CD4-positive, alpha-beta T cell (primary cell): ENCODE measurements at regions of chr16 and their contacts with region 1.

Region 1: DNA sequence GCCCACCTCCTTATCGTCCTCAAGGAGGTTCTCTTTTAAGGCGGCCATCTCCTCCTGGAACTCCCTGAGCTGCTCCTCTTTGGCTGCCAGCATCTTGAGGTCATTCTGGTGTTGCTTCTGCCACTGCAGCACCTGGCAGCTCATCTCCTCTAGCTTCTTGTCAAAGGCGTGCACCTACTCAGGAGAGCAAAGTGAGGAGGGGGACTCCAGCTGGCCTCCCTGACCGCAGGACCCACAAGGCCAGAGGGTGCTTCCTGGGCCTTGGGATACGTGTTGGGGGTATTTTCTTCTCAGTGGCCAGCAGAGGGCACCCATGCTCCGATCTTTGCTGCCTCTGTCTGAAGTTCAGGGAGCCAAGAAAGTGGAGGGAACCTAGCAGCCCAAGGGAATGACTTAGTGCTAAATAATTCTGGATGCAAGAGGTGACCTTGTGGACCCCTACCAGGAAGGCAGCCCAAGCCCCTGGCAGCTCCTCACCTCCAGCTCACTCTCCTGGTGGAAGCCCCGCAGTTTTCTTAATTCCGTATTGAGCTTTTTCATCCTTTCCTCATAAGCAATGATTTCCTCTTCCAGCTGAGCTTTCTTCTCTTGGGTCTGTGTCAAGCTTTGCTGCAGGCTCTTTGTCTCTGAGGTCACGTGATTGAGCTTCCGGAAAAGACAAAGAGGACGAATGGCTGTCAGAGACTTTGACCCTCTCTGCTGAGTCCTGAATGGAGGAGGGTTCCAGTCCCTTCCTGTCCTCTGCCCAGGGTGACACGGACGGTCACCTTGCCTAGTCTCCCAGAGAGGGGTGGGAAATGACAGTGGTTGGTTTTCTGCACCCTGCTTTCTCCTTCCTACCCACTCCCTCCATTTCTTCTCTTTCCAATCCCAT is 31.4 kb downstream of the DHX38 start:
- DNase-seq: peak; percentile 38 to 77 (median 48)
- ATAC-seq: peak; percentile 34
- H3K4me3 ChIP-seq: no peak overlapping the region
- H3K4me3 Mint-ChIP-seq: no peak overlapping the region
- H3K27ac ChIP-seq: no peak overlapping the region
- H3K27ac Mint-ChIP-seq: no peak overlapping the region
- H3K4me1 ChIP-seq: peaks cover 6% of the 10 kb centered on the region
- H3K4me1 Mint-ChIP-seq: no peaks in the 10 kb centered on the region
- H3K27me3 ChIP-seq: no peaks in the 10 kb centered on the region
- H3K27me3 Mint-ChIP-seq: no peaks in the 10 kb centered on the region
- CTCF ChIP-seq: peak; percentile 85

Region 2: DNA sequence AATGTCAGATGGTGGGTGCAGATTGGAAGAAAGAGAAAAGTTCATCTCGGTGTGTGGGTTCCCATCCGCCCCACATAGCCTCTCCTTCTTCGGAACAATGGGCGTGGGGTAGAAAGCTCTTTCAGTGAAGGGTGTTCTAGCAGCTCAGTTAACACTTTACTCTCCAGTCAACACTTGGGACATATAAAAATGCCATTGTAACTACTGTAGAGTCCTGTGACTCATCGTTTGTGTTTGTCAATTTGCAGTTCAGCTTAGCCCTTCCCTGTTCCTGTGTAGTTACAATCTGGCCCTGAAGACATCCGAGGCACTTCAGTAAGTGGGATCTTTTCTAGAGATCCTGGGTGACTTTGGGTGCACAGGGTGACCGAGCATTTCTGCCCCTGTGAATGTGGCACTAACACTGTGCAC is 1963.0 kb before region 1 on chr16:
- CTCF ChIA-PET with region 1: no interaction called
- POLR2A ChIA-PET with region 1: no interaction called
- intact Hi-C with region 1: loop called (anchors 10 kb)
- DNase-seq: no peak
- ATAC-seq: no peak
- H3K4me3 ChIP-seq: no peak overlapping the region
- H3K4me3 Mint-ChIP-seq: no peak overlapping the region
- H3K27ac ChIP-seq: no peak overlapping the region
- H3K27ac Mint-ChIP-seq: peak overlapping the region; percentile 5
- H3K4me1 ChIP-seq: no peaks in the 10 kb centered on the region
- H3K4me1 Mint-ChIP-seq: peaks cover 5% of the 10 kb centered on the region
- H3K27me3 ChIP-seq: no peaks in the 10 kb centered on the region
- H3K27me3 Mint-ChIP-seq: no peaks in the 10 kb centered on the region
- CTCF ChIP-seq: no peak

Region 3: DNA sequence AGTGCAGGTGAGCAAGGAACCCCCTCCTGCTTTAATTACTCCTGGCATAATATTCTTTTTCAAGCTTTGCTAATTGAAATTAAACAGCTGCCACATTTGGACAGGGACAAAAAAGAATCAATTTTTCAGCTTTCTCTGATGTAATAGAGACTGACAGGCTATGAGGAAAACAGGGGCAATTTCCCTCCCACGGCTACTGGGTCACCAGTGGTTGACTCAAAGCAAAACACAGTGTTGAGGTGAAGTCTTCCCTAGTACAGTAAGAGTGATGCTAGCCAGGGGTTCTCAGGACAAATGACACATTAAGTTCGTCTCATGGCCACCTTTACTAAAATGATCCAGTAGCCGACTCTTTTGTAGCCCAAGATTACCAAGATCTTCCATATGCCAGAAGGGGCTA is 85.6 kb after region 1 on chr16:
- CTCF ChIA-PET with region 1: no interaction called
- POLR2A ChIA-PET with region 1: no interaction called
- intact Hi-C with region 1: no loop called
- DNase-seq: no peak
- ATAC-seq: no peak
- H3K4me3 ChIP-seq: no peak overlapping the region
- H3K4me3 Mint-ChIP-seq: no peak overlapping the region
- H3K27ac ChIP-seq: no peak overlapping the region
- H3K27ac Mint-ChIP-seq: no peak overlapping the region
- H3K4me1 ChIP-seq: no peaks in the 10 kb centered on the region
- H3K4me1 Mint-ChIP-seq: no peaks in the 10 kb centered on the region
- H3K27me3 ChIP-seq: no peaks in the 10 kb centered on the region
- H3K27me3 Mint-ChIP-seq: peaks cover under 1% of the 10 kb centered on the region
- CTCF ChIP-seq: no peak

Region 4: GRCh38 chr16:72467157-72467759 is 342.3 kb after region 1 on chr16:
- CTCF ChIA-PET with region 1: no interaction called
- POLR2A ChIA-PET with region 1: no interaction called
- intact Hi-C with region 1: loop called in 1 of 2 experiments (anchors 5 kb)
- DNase-seq: peak in 3 of 14 experiments; percentile 9 to 24 (median 15)
- ATAC-seq: no peak
- H3K4me3 ChIP-seq: no peak overlapping the region
- H3K4me3 Mint-ChIP-seq: no peak overlapping the region
- H3K27ac ChIP-seq: no peak overlapping the region
- H3K27ac Mint-ChIP-seq: no peak overlapping the region
- H3K4me1 ChIP-seq: no peaks in the 10 kb centered on the region
- H3K4me1 Mint-ChIP-seq: no peaks in the 10 kb centered on the region
- H3K27me3 ChIP-seq: no peaks in the 10 kb centered on the region
- H3K27me3 Mint-ChIP-seq: no peaks in the 10 kb centered on the region
- CTCF ChIP-seq: no peak

Region 5: DNA sequence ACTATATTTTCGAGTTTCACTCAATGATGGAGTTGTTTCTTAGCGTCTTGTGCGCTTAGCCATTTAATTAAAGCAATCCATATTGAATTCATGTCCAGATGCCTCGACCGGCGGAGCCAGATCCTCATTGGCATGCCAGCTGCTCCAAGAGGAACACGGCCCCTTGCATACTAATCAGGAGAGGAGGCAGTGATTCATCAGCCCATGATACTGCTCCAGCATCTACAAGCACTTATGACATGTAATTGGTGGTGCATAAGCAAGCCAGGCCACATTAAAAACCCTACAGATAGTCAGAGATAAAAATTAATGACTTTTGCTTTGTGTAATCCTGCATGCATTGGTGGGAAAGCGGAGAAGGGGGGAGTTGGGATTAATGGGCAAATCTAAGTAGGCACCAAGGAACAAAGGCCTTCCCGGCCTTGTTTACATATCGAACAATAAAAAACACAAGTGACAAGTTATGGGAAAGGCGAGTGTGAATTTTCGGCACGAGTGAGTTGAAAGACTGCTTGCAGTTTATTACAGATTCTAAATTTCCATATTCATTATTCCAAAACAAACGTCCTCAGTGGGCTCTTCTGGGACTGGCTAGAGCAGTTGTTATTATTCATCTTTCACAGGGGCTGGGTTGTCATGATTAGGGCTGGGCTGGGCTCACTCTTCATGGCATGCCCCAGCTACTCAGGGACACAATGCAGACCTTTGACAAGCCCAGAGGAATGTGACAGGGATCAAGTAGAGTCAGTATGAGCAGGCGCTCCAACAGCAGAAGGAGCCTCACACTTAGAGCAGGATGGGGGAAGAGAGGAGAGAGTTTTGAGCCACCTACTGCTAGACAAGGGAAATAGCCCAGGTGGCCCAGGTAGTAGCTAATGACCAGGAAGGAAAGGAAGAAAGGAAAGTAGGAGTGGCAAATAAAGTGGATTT is 1204.6 kb after region 1 on chr16:
- CTCF ChIA-PET with region 1: no interaction called
- POLR2A ChIA-PET with region 1: no interaction called
- intact Hi-C with region 1: no loop called
- DNase-seq: no peak
- ATAC-seq: no peak
- H3K4me3 ChIP-seq: no peak overlapping the region
- H3K4me3 Mint-ChIP-seq: no peak overlapping the region
- H3K27ac ChIP-seq: no peak overlapping the region
- H3K27ac Mint-ChIP-seq: no peak overlapping the region
- H3K4me1 ChIP-seq: no peaks in the 10 kb centered on the region
- H3K4me1 Mint-ChIP-seq: no peaks in the 10 kb centered on the region
- H3K27me3 ChIP-seq: no peaks in the 10 kb centered on the region
- H3K27me3 Mint-ChIP-seq: no peaks in the 10 kb centered on the region
- CTCF ChIP-seq: no peak

Region 6: DNA sequence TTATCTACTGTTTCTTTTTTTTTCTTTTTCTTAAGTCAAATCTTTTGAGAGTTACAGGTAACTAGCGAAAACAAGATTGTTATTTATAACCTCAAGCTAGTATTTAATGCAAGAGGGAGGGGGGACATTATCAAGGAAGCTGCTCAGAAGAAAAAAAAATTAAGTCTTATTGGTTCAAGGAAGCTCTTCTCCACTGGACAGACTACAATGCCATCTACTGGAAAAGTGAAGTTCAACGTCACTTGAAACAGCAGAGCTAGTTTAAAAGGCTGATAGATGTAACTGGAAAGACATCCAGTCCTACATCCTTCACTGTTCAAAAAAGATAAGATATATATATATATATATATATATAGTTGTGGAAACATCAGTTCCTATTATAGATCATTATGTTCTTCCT is 1753.6 kb after region 1 on chr16:
- CTCF ChIA-PET with region 1: no interaction called
- POLR2A ChIA-PET with region 1: no interaction called
- intact Hi-C with region 1: loop called in 1 of 2 experiments (anchors 5 kb)
- DNase-seq: peak in 2 of 14 experiments; percentile 12 to 13
- ATAC-seq: no peak
- H3K4me3 ChIP-seq: no peak overlapping the region
- H3K4me3 Mint-ChIP-seq: no peak overlapping the region
- H3K27ac ChIP-seq: no peak overlapping the region
- H3K27ac Mint-ChIP-seq: no peak overlapping the region
- H3K4me1 ChIP-seq: no peaks in the 10 kb centered on the region
- H3K4me1 Mint-ChIP-seq: no peaks in the 10 kb centered on the region
- H3K27me3 ChIP-seq: no peaks in the 10 kb centered on the region
- H3K27me3 Mint-ChIP-seq: no peaks in the 10 kb centered on the region
- CTCF ChIP-seq: no peak

Region 7: GRCh38 chr16:73956587-73957494 is 1831.8 kb after region 1 on chr16:
- CTCF ChIA-PET with region 1: interaction called, 3 read pairs
- POLR2A ChIA-PET with region 1: no interaction called
- intact Hi-C with region 1: loop called in 1 of 2 experiments (anchors 5 kb)
- DNase-seq: peak in 5 of 14 experiments; percentile 8 to 47 (median 25)
- ATAC-seq: no peak
- H3K4me3 ChIP-seq: no peak overlapping the region
- H3K4me3 Mint-ChIP-seq: no peak overlapping the region
- H3K27ac ChIP-seq: no peak overlapping the region
- H3K27ac Mint-ChIP-seq: no peak overlapping the region
- H3K4me1 ChIP-seq: no peaks in the 10 kb centered on the region
- H3K4me1 Mint-ChIP-seq: no peaks in the 10 kb centered on the region
- H3K27me3 ChIP-seq: no peaks in the 10 kb centered on the region
- H3K27me3 Mint-ChIP-seq: peaks cover 5% of the 10 kb centered on the region
- CTCF ChIP-seq: peak; percentile 58

Region 8: DNA sequence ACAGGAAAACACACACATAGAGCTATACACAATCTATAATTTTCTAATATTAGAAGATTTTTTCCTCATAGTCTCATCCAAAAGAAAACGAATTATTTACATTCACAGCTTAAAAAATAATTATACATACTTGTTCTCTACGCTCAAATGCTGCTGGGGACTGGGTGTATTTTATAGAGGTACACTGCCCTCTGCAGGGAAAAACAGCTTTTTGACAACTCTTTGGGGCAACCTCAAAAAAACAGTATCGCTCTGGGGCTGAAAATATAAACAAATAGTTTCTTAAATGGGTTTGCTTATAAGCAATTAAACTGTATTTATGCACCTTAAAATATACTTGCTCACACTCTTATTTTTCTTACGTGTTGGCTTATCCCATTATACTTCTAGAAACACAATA is 1909.9 kb after region 1 on chr16:
- CTCF ChIA-PET with region 1: no interaction called
- POLR2A ChIA-PET with region 1: no interaction called
- intact Hi-C with region 1: loop called in 1 of 2 experiments (anchors 5 kb)
- DNase-seq: peak in 1 of 14 experiments; percentile 1
- ATAC-seq: no peak
- H3K4me3 ChIP-seq: no peak overlapping the region
- H3K4me3 Mint-ChIP-seq: no peak overlapping the region
- H3K27ac ChIP-seq: no peak overlapping the region
- H3K27ac Mint-ChIP-seq: no peak overlapping the region
- H3K4me1 ChIP-seq: no peaks in the 10 kb centered on the region
- H3K4me1 Mint-ChIP-seq: no peaks in the 10 kb centered on the region
- H3K27me3 ChIP-seq: peaks cover 0 to 5% of the 10 kb centered on the region in 2 experiments
- H3K27me3 Mint-ChIP-seq: peaks cover 3% of the 10 kb centered on the region
- CTCF ChIP-seq: no peak